ENCODE measurements at regions of chr2 and their contacts with region 1.

Region 1: DNA sequence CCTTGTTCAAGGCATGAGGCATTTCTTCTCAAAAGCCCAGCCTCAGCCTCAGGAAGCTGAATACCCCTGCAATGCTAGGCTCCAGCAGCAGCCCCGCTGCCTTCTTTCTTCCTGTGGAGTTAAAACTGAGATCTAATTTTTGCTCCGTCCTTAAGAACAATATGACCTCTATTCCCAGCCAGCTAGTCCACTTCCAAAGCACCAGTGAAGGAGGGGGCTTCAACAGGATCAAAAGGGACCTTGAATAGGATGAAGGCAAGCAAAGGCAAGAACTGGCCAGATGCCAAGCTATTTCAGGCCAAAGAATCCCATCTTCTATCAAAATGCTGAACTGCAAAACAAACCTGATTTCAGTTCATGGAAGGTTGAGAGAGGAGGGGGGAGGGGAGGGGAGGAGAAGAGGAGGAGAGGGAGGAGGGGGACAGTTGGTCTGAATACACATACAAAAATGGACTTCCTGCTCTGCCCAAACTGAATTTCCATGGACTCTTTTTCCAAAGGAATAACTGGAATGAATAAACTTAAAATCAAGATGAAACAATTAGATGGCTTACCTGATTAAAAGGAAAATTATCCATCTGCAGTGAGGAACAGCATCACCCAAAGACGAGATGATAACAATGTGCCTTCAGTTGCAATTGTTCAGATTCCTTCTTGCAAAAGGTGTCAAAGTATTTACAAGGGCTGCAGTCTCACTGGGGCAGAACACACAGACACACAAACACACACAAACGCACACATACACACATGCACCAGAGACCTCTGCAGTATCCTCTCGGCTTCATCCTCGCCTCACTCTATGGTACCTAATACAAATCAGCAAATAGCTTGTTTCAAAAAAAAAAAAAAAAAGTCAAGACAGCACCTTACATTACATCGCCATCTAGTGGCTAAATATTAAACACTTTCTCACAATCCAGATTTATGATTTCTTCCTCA is at the start of gene SCN1A:
- DNase-seq: no peak
- ATAC-seq: peak; percentile 56
- H3K4me3 Mint-ChIP-seq: peak within 1 kb of the TSS; percentile 39
- H3K27ac Mint-ChIP-seq: no peak within 1 kb of the TSS
- H3K4me1 Mint-ChIP-seq: peaks cover 34% of the 10 kb centered on the region
- H3K27me3 Mint-ChIP-seq: no peaks in the 10 kb centered on the region
- CTCF ChIP-seq: peak; percentile 56
- total RNA-seq, gene SCN1A: 0.62 to 1.6 TPM (median 1.0 TPM) in 3 replicates

Region 2: DNA sequence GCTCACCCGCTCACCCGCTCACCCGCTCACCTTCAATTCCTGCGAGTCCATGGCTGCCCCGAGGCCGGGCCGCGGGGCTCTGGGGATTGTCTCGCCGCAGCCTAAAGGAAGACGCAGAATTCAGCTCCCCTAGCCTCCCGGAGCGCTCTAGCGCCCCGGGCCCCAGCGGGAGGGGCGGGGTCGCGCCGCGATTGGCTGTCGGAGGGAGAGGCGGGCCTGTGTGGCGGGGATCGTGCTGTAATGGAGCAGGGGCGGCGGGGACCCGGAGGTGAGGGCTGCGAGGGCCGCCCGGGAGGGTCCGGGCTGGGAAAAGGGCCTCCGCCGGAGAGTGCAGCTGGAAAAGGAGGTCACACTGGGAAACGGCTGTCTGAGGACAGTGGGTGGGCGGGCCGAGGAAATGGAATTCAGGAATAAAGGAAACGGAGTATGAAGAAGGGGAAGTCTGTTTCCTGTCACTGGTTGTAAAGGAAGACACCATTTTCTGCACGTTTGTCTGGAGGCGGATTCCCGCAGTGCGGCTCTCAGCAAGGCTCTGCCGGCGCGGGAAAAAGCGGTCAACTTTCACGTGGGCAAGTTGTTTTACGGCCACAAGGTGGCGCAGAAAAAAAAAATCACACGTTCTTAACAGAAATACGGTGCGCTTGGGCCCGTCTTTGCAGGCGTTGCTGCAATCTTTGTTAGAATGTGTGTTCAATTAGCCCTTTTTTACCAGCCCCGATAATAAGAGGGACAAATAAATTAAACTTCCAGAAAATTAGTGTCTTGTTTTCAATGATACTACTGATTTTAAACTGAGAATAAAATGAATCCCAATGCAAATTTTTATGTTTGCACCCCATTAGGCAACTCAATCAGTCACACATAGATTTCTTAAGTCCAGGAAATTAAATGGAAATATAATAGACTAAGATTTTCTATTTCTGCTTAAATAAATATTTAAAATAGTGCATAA is 173.6 kb before region 1 on chr2 and contains the start of gene TTC21B:
- CTCF ChIA-PET with region 1: interaction called, 21 read pairs
- POLR2A ChIA-PET with region 1: interaction called, 5 read pairs
- DNase-seq: peak; percentile 95
- ATAC-seq: peak; percentile 94
- H3K4me3 Mint-ChIP-seq: no peak within 1 kb of the TSS; the same call in none of the 2 replicates
- H3K27ac Mint-ChIP-seq: no peak within 1 kb of the TSS
- H3K4me1 Mint-ChIP-seq: peaks cover 10% of the 10 kb centered on the region
- H3K27me3 Mint-ChIP-seq: no peaks in the 10 kb centered on the region
- CTCF ChIP-seq: peak; percentile 83
- total RNA-seq, gene TTC21B: 16.9 to 20.8 TPM (median 17.8 TPM) in 3 replicates

Region 3: GRCh38 chr2:166057370-166058164 is 69.9 kb before region 1 on chr2:
- CTCF ChIA-PET with region 1: interaction called, 27 read pairs
- POLR2A ChIA-PET with region 1: no interaction called
- DNase-seq: no peak
- ATAC-seq: no peak
- H3K4me3 Mint-ChIP-seq: no peak overlapping the region
- H3K27ac Mint-ChIP-seq: no peak overlapping the region
- H3K4me1 Mint-ChIP-seq: no peaks in the 10 kb centered on the region
- H3K27me3 Mint-ChIP-seq: no peaks in the 10 kb centered on the region
- CTCF ChIP-seq: peak; percentile 44; the same call in 1 of the 2 replicates

Region 4: DNA sequence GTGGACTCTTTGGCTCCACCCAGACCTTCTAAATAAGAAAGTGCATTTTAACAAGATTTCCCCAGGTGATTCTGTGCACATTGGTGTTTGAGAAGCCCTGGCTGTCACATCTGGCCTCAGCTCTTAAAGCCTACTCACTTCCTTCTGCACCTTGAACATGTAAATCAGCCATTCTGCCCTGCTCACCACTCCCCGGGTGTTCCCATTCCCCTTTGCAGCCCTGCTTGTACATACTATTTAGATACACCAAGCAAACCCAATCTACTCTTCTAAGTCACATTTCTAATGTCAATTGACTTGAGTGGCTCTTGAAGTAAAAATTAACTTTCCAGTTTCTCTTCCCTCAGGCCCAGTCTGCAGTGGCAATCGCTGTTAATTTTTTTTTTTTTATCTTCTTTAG is 13.4 kb after region 1 on chr2:
- CTCF ChIA-PET with region 1: interaction called, 12 read pairs
- POLR2A ChIA-PET with region 1: interaction called, 3 read pairs
- DNase-seq: no peak
- ATAC-seq: peak; percentile 65
- H3K4me3 Mint-ChIP-seq: no peak overlapping the region
- H3K27ac Mint-ChIP-seq: no peak overlapping the region
- H3K4me1 Mint-ChIP-seq: peaks cover 8% of the 10 kb centered on the region
- H3K27me3 Mint-ChIP-seq: no peaks in the 10 kb centered on the region
- CTCF ChIP-seq: no peak

Region 5: DNA sequence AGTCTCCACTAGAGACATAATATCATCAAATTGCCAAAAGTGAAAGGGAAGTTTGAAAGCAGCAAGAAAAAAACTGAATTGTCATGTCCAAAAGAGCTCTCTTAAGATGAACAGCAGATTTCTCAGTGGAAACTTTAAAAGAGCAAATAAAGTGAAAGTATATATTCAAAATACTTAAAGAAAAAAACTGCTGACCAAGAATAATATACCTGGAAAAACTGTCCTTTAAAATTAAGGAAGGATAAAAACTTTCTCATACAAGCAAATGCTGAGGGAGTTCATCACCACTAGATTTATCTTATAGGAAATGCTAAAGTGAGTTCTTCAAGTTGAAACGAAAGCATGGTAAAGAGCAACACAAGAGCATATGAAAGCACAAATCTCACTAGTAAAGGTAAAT is 83.6 kb after region 1 on chr2:
- CTCF ChIA-PET with region 1: no interaction called
- POLR2A ChIA-PET with region 1: no interaction called
- DNase-seq: no peak
- ATAC-seq: no peak
- H3K4me3 Mint-ChIP-seq: no peak overlapping the region
- H3K27ac Mint-ChIP-seq: no peak overlapping the region
- H3K4me1 Mint-ChIP-seq: no peaks in the 10 kb centered on the region
- H3K27me3 Mint-ChIP-seq: no peaks in the 10 kb centered on the region
- CTCF ChIP-seq: no peak

Measured in WTC11 (cell line).